ENCODE measurements at regions of chr4 and their contacts with region 1.

Region 1: GRCh38 chr4:2954358-2955185 is 8.6 kb downstream of the NOP14 start:
- DNase-seq: peak; percentile 53
- ATAC-seq: peak; percentile 67
- H3K4me3 Mint-ChIP-seq: no peak overlapping the region
- H3K27ac Mint-ChIP-seq: peak overlapping the region; percentile 89
- H3K4me1 Mint-ChIP-seq: peaks cover 47% of the 10 kb centered on the region
- H3K27me3 Mint-ChIP-seq: no peaks in the 10 kb centered on the region

Region 2: DNA sequence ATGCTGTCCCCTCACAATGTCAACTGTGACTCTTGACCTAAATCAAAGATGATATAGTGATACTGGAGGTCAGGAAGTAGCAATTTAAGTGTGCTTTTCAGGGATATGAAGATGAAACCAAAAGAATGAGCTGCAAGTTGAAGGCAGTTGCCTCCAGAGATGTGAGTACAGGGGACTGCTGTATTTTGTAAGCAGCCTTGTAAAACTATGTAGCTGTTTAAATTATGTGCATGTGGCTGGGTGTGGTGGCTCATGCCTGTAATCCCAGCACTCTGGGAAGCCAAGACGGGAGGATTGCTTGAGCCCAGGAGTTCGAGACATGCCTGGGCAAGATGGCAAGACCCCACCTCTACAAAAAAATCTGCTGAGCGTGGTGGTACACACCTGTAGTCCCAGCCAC is 183.3 kb before region 1 on chr4:
- CTCF ChIA-PET with region 1: interaction called, 12 read pairs
- POLR2A ChIA-PET with region 1: interaction called, 4 read pairs
- DNase-seq: no peak
- ATAC-seq: peak; percentile 52
- H3K4me3 Mint-ChIP-seq: no peak overlapping the region
- H3K27ac Mint-ChIP-seq: peak overlapping the region; percentile 73
- H3K4me1 Mint-ChIP-seq: peaks cover 39% of the 10 kb centered on the region
- H3K27me3 Mint-ChIP-seq: no peaks in the 10 kb centered on the region

Region 3: DNA sequence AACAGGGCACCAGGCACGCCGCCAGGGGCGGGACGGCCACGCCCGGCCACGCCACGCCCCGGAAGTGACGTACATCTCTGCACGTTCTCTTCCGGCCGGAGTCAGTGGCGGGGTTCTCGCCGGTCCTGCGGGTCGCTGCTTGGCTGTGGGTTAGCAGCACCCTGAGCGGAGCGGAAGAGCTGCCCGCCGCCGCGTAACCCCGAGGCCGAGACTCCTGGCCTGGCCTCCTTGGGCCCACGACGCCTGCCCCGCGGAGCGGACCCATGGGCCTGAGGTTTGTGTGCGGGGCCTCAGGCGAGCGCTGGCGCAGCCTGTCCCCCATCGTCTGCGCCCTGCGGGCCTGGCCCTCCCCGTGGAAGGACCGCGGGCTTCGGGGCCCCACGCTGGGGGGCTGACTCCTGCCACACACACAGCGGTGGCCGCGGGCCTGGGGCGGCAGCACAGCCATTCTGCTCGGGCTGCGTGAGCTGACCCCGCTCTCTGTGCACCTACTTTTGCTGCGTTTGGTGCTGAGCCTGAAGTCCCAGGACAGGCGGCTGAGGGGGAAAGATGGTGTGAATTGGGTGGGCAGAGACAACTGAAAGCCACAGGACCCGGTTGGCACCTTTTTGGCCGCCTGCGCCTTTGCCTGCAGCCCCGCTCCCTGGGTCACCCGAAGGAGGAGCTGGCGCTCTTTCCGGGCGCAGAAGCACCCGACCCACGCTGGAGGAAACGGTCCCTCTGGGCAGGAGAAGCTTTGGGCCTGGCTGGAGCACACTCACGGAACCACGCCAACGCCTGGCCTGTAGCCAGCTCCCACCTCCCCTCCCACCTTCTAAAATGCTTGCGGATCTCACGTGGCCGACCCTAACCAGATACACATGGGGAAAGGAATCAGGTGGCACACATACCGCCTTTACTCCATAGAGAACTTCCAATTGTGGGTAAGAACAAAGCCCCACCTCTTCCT is 19.5 kb before region 1 on chr4:
- CTCF ChIA-PET with region 1: interaction called, 44 read pairs
- POLR2A ChIA-PET with region 1: interaction called, 6 read pairs
- DNase-seq: peak; percentile 97
- ATAC-seq: peak; percentile 75
- H3K4me3 Mint-ChIP-seq: peak overlapping the region; percentile 84
- H3K27ac Mint-ChIP-seq: peak overlapping the region; percentile 89
- H3K4me1 Mint-ChIP-seq: peaks cover 55% of the 10 kb centered on the region
- H3K27me3 Mint-ChIP-seq: no peaks in the 10 kb centered on the region

Region 4: DNA sequence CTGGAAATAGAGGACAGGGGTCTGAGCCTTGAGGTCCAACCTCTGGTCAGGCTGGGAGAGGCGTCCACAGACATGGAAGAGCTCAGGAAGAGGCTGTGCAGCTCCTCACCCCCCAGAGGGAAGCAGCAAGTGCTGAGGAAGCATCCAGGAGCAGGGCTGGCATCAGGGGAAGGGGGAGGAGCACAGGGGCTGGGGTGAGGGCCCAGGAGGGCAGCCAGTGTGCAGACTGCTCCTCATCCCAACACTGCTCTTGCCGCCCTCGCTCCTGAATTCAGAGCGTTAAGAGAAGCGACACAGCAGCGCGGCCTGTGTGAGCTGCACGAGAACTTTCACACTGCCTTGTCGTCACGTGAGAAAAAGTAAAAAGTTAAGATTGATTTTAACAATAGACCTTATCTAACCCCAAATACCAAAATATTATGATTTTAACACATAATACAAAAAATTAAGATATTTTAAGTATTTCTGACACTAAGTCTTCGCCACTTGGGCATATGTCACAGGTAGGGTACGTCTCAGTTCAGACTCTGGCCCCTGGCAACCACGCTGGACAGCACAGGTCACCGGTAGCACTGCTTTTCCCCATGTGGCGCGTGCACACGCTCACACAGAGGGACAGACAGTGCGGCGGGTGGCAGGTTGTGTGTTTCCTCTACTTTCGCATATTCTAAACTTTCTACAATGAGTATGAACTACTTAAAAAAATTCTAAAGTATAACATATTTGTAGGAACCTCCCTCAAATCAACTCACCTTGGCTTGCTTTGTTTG is 11.1 kb before region 1 on chr4:
- CTCF ChIA-PET with region 1: interaction called, 44 read pairs
- POLR2A ChIA-PET with region 1: no interaction called
- DNase-seq: no peak
- ATAC-seq: no peak
- H3K4me3 Mint-ChIP-seq: no peak overlapping the region
- H3K27ac Mint-ChIP-seq: peak overlapping the region; percentile 52
- H3K4me1 Mint-ChIP-seq: peaks cover 36% of the 10 kb centered on the region
- H3K27me3 Mint-ChIP-seq: no peaks in the 10 kb centered on the region

Region 5: DNA sequence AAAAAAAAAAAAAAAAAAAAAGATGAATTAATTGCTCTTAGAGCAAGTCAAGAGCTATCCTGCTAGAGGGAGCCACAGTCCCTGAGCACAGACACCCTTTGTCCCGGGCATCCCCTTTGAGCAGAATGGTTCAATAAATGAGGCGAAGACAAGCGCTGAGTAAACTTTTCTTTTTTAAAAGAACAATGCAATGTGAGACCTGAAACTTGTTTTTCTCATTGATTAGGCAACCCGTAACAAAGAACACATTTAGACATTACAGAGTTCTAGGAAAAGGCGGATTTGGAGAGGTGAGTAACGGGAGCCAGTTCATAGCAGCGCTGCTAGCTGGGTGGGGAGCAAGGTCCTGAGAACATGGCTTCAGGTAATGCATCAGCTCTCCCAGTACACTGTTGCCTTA is 54.9 kb after region 1 on chr4:
- CTCF ChIA-PET with region 1: no interaction called
- POLR2A ChIA-PET with region 1: no interaction called
- DNase-seq: peak; percentile 24
- ATAC-seq: no peak
- H3K4me3 Mint-ChIP-seq: no peak overlapping the region
- H3K27ac Mint-ChIP-seq: no peak overlapping the region
- H3K4me1 Mint-ChIP-seq: no peaks in the 10 kb centered on the region
- H3K27me3 Mint-ChIP-seq: peaks cover 3% of the 10 kb centered on the region

Region 6: DNA sequence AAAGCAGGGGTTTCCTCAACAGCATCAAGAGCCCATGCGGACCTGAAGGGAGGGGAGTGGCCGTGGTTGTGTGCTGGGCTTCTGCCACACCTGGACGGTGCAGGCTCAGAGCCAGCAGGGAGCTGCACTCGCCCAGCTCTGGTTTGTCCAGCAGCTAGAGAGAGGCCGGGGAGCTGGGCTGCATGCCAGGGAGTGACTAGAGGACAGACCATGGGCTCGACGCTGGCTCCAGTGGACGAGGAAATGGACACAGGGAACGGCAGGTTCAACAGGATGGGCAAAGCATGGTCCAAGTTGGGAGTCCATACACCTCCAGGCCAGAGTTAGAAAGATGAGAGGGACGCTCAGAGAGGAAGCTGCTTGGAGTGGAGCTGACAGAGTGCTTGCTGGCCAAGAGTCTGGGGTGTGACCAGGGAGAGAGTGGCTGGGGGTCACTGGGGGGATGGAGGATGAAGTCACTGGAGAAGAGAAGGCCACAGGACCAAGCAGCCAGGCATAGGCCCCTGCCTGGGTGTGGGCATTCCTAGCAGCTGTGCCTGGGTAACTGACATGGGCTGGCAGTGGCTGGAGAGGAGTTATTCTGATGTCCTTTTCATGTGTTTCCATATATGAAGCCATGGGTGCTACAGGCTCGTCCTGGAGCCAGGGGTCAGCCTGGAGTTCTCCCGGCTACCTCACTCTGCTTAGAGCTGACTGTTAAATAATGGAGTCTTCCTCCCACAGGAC is 76.9 kb after region 1 on chr4:
- CTCF ChIA-PET with region 1: no interaction called
- POLR2A ChIA-PET with region 1: no interaction called
- DNase-seq: no peak
- ATAC-seq: no peak
- H3K4me3 Mint-ChIP-seq: no peak overlapping the region
- H3K27ac Mint-ChIP-seq: no peak overlapping the region
- H3K4me1 Mint-ChIP-seq: no peaks in the 10 kb centered on the region
- H3K27me3 Mint-ChIP-seq: peaks cover 6% of the 10 kb centered on the region

Measured in activated CD8-positive, alpha-beta T cell treated with anti-CD3 and anti-CD28 coated beads, Interleukin-2, amount 10 ng/mL, durations not matched to agents 7 days and 5 days (primary cell).